MCF 10A (cell line): ENCODE measurements at regions of chr17 and their contacts with region 1.

Region 1: DNA sequence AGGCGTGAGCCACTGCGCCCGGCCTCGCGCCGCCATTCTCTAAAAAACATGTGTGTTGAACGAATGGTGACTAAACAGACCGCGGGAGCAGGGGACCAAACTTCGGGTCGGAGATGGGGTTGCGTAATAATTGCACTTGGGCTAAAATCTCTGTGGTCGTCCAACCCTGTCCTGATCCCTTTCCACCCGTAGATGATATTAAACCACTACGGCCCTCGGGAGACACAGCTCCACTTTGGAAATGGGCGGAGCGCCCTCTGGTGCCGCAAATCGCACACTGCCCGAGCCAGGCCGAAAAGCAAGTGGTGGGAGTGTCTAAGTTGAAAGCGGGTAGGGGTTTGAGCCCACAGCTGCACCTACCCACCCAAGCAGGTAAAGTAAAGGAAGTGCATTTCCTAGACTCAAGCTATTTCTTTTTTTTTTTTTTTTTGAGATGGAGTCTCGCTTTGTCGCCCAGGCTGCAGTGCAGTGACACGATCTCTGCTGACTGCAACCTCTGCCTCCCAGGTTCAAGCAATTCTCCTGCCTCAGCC is 17.0 kb downstream of the CAVIN1 start:
- DNase-seq: peak; percentile 73
- H3K4me3 Mint-ChIP-seq: no peak overlapping the region
- H3K27ac Mint-ChIP-seq: peak overlapping the region; percentile 6
- H3K4me1 Mint-ChIP-seq: peaks cover 28% of the 10 kb centered on the region
- H3K27me3 Mint-ChIP-seq: no peaks in the 10 kb centered on the region
- CTCF ChIP-seq: peak; percentile 74

Region 2: DNA sequence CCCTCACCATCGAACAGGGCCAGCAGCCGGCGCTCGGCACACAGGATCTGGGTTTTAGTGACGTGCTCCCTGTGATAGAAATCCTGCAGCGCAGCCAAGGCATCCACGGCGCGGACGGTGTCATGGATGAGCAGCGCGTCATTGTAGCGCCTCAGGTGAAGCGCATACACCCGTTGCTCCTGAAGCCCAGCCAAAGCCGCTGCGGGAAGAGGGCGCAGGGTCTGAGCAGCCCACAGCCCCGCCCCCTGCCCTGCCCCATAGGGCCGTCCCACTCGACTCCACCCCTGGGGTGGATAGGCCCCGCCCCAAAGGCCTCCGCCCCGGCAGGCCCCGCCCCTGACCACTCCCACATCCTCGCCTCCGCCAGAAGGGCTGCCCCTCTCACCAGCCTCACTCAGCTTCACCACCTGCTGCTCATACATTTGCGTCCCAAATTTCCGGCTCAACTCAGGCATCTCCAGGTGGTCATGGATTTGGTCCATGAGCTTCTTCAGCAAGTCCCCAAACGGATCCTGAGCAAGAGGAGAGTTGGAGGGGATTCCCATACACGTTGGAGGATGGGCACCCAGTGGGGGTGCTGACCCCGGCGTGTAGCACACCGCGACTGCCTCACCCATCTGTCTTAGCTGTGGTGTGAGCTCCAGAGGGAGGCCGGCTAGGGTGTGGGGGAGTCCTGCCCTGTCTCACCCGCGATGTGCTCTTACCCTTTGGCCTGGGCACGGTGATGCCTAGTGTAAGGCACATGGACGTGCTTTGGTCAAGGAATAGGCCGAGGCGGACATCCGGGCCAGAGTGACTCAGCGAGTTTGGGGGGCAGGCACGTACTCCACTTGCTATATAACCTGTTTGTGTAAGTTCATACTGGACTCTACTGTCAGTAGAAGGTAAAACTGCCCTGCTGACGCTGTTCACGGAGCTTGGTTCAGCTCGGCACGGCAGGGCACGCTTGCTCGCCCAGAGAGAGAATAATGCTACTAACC is 298.1 kb before region 1 on chr17:
- CTCF ChIA-PET with region 1: no interaction called
- POLR2A ChIA-PET with region 1: no interaction called
- intact Hi-C with region 1: no loop called
- DNase-seq: peak; percentile 68
- H3K4me3 Mint-ChIP-seq: no peak overlapping the region
- H3K27ac Mint-ChIP-seq: no peak overlapping the region
- H3K4me1 Mint-ChIP-seq: no peaks in the 10 kb centered on the region
- H3K27me3 Mint-ChIP-seq: no peaks in the 10 kb centered on the region
- CTCF ChIP-seq: no peak

Region 3: DNA sequence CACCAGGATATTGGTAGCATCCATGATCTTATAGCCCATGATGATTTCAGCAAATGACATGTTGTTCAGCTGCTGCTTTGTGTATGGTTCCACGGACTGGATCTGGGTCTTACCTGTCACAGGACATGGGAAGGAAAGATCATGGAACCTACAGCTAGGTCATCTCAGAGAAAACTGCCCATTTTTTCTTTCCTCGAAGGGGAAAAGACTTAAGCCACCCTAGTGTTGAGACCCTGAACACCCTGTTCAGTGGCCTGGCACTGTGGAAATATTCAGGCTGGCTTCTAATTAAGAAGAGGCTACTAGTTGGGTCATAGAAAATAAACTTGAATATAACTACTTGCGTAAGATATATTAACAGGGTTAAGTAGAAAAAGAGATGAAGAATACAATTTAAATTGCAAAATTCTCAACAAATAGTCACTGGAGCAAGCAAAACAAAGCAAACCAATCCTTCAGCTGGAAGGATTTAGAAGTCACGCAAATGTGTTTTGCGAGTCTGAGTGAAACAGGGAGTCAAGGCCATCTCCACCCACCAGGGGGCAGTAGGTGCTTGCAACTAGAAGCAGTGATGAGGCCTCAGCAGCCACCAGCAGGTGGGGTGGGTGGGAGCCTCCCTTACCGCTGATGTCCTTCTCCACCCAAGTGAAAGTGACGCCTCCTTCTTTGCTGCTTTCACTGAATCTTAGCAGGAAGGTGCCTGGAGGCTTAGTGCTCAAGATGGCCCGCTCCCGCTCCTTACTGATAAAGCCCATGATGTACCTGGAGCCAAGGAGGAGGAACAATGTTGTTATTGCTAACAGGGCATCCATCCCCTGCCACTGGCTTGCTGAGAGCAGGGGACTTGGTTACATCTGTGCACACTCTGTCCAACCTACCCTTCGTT is 83.4 kb before region 1 on chr17:
- CTCF ChIA-PET with region 1: interaction called, 25 read pairs
- POLR2A ChIA-PET with region 1: interaction called, 13 read pairs
- intact Hi-C with region 1: loop called (anchors 1 kb)
- DNase-seq: peak; percentile 93
- H3K4me3 Mint-ChIP-seq: no peak overlapping the region
- H3K27ac Mint-ChIP-seq: peak overlapping the region; percentile 46
- H3K4me1 Mint-ChIP-seq: peaks cover 11% of the 10 kb centered on the region
- H3K27me3 Mint-ChIP-seq: no peaks in the 10 kb centered on the region
- CTCF ChIP-seq: peak; percentile 99

Region 4: DNA sequence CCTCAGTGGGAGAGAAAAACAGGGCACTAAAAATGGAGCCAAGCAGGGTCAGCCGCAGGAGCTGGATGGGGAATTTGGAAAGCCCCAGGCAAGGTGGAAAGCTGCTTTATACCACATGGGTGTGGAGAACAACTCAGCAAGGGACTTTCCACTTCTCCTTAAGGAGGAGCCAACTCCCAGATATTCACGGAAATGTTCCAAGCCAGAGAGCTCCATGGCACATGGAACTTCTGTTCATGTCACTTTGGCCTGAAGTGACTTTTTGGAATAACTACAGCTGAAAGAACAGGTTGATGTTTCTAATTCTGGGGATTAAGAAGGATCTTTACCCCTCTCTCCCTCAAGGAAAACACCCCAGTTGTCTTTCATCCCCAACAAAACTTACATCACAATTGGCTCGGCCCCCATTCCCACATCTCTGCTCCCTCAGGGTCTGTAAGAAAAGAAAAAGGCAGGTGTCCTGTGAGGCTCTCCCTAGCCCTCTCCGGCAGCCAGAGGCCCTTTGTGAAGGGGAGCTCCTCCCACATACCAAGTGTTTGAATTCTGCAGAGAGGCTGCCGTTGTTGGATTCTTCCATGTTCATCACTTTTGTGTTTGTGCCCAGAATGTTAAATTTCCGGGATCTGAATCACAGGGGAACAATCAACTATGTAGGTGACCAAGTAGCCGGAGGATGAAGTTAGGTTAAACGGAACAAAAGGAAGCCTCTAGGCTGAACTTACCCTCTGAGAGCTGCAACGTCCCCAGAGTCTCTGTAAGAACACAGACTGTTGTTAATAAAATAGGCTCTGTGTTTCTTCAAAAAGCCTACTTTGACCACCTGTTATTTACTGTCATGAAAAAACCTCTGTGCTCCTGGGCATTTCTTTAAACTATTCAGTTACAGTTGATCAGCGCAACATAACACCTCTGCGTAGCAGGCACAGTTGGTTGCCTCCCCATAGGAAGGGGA is 76.7 kb before region 1 on chr17:
- CTCF ChIA-PET with region 1: interaction called, 25 read pairs
- POLR2A ChIA-PET with region 1: interaction called, 21 read pairs
- intact Hi-C with region 1: no loop called
- DNase-seq: peak; percentile 87
- H3K4me3 Mint-ChIP-seq: peak overlapping the region; percentile 58
- H3K27ac Mint-ChIP-seq: peak overlapping the region; percentile 91
- H3K4me1 Mint-ChIP-seq: peaks cover 24% of the 10 kb centered on the region
- H3K27me3 Mint-ChIP-seq: no peaks in the 10 kb centered on the region
- CTCF ChIP-seq: no peak